ENCODE measurements at regions of chr1 and their contacts with region 1.

Region 1: GRCh38 chr1:58783993-58784757 is at the start of gene JUN:
- DNase-seq: peak; percentile 93
- ATAC-seq: peak; percentile 72
- H3K4me3 Mint-ChIP-seq: peak within 1 kb of the TSS; percentile 96
- H3K27ac Mint-ChIP-seq: peak within 1 kb of the TSS; percentile 99
- H3K4me1 Mint-ChIP-seq: peaks cover 38% of the 10 kb centered on the region
- H3K27me3 Mint-ChIP-seq: no peaks in the 10 kb centered on the region
- CTCF ChIP-seq: no peak
- total RNA-seq, gene JUN: 35.3 and 36.6 TPM in 2 replicates

Region 2: DNA sequence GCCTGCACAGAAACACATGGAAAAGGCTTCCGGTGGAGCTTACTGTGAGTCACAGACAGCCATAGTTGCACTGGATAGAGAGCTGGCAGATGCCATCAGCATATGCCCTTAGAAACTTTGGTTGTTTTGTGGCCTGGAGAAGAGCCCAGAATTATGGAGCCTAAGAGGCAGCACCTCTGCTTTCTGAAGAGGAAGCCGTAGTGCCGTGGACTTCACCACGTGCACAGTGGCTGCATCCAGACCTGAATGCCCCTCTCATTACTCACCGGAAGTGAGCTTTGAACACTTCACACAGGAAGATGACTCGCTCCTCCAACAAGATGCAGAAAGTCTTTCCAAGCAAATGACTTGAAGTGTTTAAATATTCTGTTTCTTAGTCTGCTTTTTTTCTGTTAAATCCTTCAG is 28.7 kb before region 1 on chr1:
- CTCF ChIA-PET with region 1: no interaction called
- POLR2A ChIA-PET with region 1: interaction called, 11 read pairs
- intact Hi-C with region 1: no loop called
- DNase-seq: no peak
- ATAC-seq: peak; percentile 79
- H3K4me3 Mint-ChIP-seq: no peak overlapping the region
- H3K27ac Mint-ChIP-seq: no peak overlapping the region
- H3K4me1 Mint-ChIP-seq: peaks cover 13% of the 10 kb centered on the region
- H3K27me3 Mint-ChIP-seq: no peaks in the 10 kb centered on the region
- CTCF ChIP-seq: no peak

Region 3: DNA sequence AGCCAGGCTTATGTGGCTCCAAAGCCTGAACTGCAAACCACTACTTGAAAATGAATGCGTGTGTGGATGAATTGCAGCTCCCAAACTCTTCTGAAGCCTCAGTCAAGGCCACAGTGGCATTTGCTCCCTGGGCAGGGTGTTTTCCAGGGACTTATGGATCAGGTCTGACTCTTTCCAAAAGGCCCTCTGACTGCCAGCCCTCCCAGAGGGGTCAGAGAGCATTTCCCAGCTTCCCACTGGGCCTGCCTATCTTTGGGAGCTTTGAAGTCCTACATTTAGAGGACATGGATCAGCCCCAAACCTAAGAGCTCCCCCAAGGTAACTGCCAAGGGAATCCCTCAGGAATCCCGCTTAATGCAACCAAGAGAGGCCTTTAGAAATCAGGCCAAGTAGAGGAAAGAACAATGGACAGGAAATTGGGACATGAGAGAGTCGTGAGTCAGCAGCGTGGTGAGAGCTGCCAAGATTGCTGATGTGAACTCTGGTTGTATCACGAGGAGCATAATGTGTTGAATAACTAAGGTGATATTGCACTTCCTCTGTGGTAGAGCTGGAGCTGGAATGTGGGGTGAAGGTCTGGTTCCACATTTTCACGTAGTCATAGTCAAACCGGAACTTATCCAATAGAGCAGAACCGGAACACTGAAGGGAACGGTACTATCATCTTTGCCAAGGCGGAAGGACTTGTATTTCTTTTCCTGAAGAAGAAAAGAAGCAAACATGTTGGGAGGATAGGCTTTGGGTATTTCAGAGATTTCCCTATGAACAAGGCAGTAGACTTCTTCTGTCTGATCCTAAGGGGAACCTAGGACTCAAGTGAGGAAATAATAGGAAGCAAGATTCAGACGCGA is 99.1 kb after region 1 on chr1:
- CTCF ChIA-PET with region 1: no interaction called
- POLR2A ChIA-PET with region 1: interaction called, 10 read pairs
- intact Hi-C with region 1: no loop called
- DNase-seq: no peak
- ATAC-seq: no peak
- H3K4me3 Mint-ChIP-seq: peak overlapping the region; percentile 21
- H3K27ac Mint-ChIP-seq: no peak overlapping the region
- H3K4me1 Mint-ChIP-seq: peaks cover 17% of the 10 kb centered on the region
- H3K27me3 Mint-ChIP-seq: peaks cover 2% of the 10 kb centered on the region
- CTCF ChIP-seq: no peak

Region 4: GRCh38 chr1:59020151-59020997 is 236.2 kb after region 1 on chr1:
- CTCF ChIA-PET with region 1: no interaction called
- POLR2A ChIA-PET with region 1: interaction called, 35 read pairs
- intact Hi-C with region 1: no loop called
- DNase-seq: no peak
- ATAC-seq: peak; percentile 96
- H3K4me3 Mint-ChIP-seq: peak overlapping the region; percentile 77
- H3K27ac Mint-ChIP-seq: peak overlapping the region; percentile 91
- H3K4me1 Mint-ChIP-seq: peaks cover 52% of the 10 kb centered on the region
- H3K27me3 Mint-ChIP-seq: no peaks in the 10 kb centered on the region
- CTCF ChIP-seq: no peak

Region 5: GRCh38 chr1:59272507-59272906 is 488.3 kb after region 1 on chr1:
- CTCF ChIA-PET with region 1: no interaction called
- POLR2A ChIA-PET with region 1: interaction called, 44 read pairs
- intact Hi-C with region 1: loop called (anchors 1 kb)
- DNase-seq: no peak
- ATAC-seq: peak; percentile 94
- H3K4me3 Mint-ChIP-seq: peak overlapping the region; percentile 57
- H3K27ac Mint-ChIP-seq: peak overlapping the region; percentile 84
- H3K4me1 Mint-ChIP-seq: peaks cover 57% of the 10 kb centered on the region
- H3K27me3 Mint-ChIP-seq: no peaks in the 10 kb centered on the region
- CTCF ChIP-seq: no peak

Region 6: GRCh38 chr1:59692591-59692990 is 908.4 kb after region 1 on chr1:
- CTCF ChIA-PET with region 1: interaction called, 36 read pairs
- POLR2A ChIA-PET with region 1: interaction called, 15 read pairs
- intact Hi-C with region 1: loop called (anchors 1 kb)
- DNase-seq: no peak
- ATAC-seq: peak; percentile 66
- H3K4me3 Mint-ChIP-seq: no peak overlapping the region
- H3K27ac Mint-ChIP-seq: peak overlapping the region; percentile 22
- H3K4me1 Mint-ChIP-seq: peaks cover 27% of the 10 kb centered on the region
- H3K27me3 Mint-ChIP-seq: no peaks in the 10 kb centered on the region
- CTCF ChIP-seq: no peak

Measured in activated B cell treated with CpG ODN at 0.5 μM for 24 hours (primary cell).